A673 (cell line): ENCODE measurements at regions of chr21 and their contacts with region 1.

Region 1: DNA sequence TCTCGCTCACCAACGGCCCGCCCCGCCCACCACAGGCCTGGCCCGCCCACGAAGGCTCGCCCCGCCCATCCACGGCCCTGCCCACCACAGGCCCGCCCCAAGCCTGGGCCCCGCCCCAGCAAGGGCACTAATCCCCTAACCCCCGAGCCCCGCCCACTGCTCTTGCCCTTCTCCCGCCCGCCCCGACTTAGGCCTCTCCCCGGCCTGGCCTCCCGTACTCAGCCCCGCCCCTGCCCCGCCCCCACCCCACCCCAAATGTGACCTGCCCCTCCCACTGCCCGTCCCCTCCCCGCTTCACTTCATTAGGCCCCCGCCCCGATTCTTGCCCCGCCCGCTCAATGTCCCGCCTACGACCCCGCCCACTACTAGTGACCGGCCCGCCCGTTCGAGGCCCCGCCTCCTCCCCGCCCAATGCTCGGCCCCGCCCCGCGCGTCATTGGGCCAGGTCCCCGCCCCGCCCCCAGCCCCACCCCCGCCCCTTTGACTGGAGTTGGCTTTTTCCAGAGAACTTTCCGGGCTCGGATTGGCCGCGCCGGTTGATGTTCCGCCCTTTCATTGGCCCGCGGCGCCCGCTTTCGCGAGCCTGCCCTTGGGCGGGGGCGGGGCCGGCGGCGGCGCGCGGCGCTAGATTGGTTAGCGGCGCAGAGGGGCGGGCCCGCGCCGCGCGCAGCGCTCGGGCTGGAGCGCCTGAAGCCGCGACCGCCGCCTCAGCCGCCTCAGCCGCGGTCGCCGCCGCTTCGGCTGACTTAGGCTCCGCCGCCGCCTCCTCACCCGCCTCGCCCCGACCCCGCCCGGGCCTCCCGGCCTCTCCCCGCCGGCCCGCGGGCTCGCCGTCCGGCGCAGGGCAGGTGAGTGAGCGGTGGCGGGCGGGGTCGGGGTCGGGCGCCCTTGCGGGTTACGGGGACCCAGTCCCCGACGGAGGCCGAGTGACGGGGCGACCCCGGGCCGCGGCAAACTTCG is at the start of gene PCBP3:
- DNase-seq: peak; percentile 98
- H3K4me3 ChIP-seq: peak within 1 kb of the TSS; percentile 54
- H3K27ac ChIP-seq: peak within 1 kb of the TSS; percentile 80
- H3K4me1 ChIP-seq: peaks cover 37% of the 10 kb centered on the region
- H3K27me3 ChIP-seq: no peaks in the 10 kb centered on the region
- CTCF ChIP-seq: no peak
- total RNA-seq, gene PCBP3: 22.0 and 25.6 TPM in 2 replicates

Region 2: GRCh38 chr21:45554477-45555175 is 88.7 kb before region 1 on chr21:
- CTCF ChIA-PET with region 1: no interaction called
- POLR2A ChIA-PET with region 1: no interaction called
- intact Hi-C with region 1: loop called (anchors 5 kb)
- DNase-seq: peak; percentile 83
- H3K4me3 ChIP-seq: peak overlapping the region; percentile 83
- H3K27ac ChIP-seq: peak overlapping the region; percentile 51
- H3K4me1 ChIP-seq: no peaks in the 10 kb centered on the region
- H3K27me3 ChIP-seq: no peaks in the 10 kb centered on the region
- CTCF ChIP-seq: peak; percentile 71

Region 3: DNA sequence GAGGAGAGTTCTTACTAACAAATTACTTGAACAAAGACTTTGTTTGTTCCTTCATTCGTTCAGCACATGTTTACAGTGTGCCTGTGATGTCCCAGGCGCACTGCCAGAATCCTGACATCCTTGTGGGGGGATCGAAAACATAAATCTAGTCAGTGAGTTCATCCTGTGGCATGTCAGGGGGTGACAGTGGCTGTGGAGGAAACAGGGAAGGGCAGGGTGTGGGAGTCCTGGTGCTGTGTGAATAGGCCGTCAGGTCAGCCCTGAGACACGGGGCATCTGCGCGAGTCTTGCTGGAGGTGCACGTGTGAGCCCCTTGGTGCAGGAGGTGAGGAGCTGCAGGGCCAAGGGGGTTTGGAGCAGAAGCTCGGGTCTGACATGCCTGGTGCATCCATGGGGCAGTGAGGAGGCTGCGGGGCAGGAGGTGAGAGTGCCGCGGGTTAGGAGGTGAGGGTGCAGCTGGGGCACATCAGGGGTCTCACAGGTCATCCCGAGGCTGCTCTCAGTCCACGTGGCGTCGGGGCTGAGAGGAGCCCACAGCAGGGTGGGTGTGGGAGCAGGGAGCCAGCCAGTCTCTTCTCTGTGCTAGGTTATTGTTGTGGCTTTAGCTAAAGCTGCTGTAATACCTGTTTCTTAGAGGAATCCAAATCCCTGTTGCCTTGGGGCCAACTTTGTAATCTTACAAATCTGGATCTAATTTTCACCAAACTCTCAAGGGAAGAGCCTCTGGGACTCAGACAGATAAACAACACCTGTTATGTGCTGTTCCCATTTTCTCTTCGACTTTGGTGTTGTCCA is 93.6 kb after region 1 on chr21:
- CTCF ChIA-PET with region 1: no interaction called
- POLR2A ChIA-PET with region 1: no interaction called
- intact Hi-C with region 1: loop called (anchors 10 kb)
- DNase-seq: no peak
- H3K4me3 ChIP-seq: no peak overlapping the region
- H3K27ac ChIP-seq: peak overlapping the region; percentile 89
- H3K4me1 ChIP-seq: peaks cover 47% of the 10 kb centered on the region
- H3K27me3 ChIP-seq: no peaks in the 10 kb centered on the region
- CTCF ChIP-seq: no peak

Region 4: GRCh38 chr21:45831991-45832740 is 188.9 kb after region 1 on chr21:
- CTCF ChIA-PET with region 1: no interaction called
- POLR2A ChIA-PET with region 1: no interaction called
- intact Hi-C with region 1: no loop called
- DNase-seq: no peak
- H3K4me3 ChIP-seq: no peak overlapping the region
- H3K27ac ChIP-seq: no peak overlapping the region
- H3K4me1 ChIP-seq: no peaks in the 10 kb centered on the region
- H3K27me3 ChIP-seq: no peaks in the 10 kb centered on the region
- CTCF ChIP-seq: no peak

Region 5: GRCh38 chr21:46092026-46092764 is 448.9 kb after region 1 on chr21:
- CTCF ChIA-PET with region 1: no interaction called
- POLR2A ChIA-PET with region 1: no interaction called
- intact Hi-C with region 1: no loop called
- DNase-seq: no peak
- H3K4me3 ChIP-seq: no peak overlapping the region
- H3K27ac ChIP-seq: no peak overlapping the region
- H3K4me1 ChIP-seq: no peaks in the 10 kb centered on the region
- H3K27me3 ChIP-seq: no peaks in the 10 kb centered on the region
- CTCF ChIP-seq: no peak